ENCODE measurements at regions of chr6 and their contacts with region 1.

Region 1: DNA sequence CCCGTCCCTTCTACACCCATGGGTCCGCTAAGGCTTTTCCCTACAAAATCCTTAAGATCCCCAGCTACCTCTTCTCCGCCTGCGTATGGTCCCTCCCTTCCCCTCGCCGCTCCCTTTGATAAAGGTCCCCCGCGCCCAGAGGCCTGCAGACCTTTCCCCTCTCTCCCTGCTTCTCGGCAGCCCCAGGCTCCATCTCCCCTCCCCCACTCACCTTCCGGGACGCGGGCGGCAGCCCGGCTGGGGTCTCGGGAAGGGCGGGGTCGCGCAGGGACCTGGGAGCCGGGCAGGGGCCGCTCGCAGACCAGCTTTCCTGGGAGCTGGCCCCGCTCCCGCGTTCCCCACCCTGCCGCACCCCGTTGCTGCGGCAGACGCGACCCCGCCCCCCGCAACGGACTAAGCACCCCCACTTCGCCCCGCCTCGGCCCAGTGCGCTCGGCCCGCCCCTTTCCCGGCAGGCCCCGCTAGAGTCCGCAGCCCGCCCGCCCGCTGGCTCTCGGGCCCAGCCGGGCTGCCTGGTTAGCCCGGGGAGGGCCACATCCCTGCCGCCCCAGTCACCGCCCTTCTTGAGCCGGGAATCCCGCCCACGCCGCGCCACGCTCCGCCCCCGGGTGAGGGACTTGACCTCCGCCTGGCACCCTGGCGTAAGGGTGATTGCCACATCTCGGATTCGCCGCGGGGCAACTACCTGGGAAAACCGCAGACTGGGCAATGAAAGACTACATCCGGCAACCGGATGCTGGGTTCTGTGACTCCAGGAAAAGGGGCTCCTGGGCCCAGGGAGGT is at the start of gene FLOT1:
- DNase-seq: peak; percentile 99
- ATAC-seq: peak; percentile 92
- total RNA-seq, gene FLOT1: 207 TPM

Region 2: GRCh38 chr6:29477923-29478450 is 1264.5 kb before region 1 on chr6:
- intact Hi-C with region 1: no loop called
- DNase-seq: no peak
- ATAC-seq: no peak

Region 3: DNA sequence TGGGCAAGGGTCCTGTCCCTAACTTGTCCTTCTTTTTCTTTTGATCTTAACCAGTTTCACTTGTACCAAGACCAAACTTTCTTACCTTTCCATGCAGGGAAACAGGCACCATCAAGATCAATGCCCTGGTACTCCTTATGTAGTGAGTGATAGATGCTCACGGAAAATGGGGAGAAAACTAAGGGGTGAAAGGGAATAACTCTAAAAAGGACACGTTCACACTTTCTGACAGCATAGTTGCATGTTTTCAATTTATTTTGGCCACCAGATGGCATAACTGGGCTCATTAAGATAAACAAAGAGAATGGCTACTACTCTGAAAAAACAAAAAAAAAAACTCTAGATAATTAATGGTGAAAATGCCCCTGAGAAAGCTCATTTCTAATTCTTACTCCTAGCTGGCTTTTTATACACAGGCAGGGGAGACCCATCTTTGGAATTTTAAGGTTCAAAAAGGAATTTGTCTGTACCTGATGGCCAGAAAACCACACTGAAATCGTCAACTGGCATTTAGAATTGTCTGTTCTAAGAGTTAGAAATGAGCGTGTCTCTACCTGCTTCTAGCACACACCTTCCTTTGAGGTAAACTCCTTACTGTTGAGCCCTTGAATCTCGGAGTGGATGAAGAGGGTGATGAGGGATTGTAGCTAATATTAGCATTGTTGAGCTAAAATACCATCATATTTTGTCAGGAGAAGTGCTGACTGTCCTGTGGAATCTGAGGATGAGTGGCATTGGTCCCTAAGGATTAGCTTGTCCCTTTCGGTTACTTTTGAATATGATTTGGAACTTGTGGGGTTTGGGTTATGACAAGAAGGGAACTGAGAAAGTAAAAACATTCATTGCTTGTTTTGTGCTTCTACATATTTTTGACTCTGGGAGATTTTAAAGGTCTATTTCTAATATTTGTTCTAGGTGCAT is 79.6 kb after region 1 on chr6:
- intact Hi-C with region 1: loop called (anchors 5 kb)
- DNase-seq: no peak
- ATAC-seq: peak; percentile 45

Region 4: GRCh38 chr6:30883685-30884520 is 141.4 kb after region 1 on chr6 and contains the start of gene DDR1:
- intact Hi-C with region 1: loop called (anchors 5 kb)
- DNase-seq: peak; percentile 84
- ATAC-seq: peak; percentile 80
- total RNA-seq, gene DDR1: 23.2 TPM

Region 5: GRCh38 chr6:31087494-31088089 is 345.1 kb after region 1 on chr6:
- intact Hi-C with region 1: loop called (anchors 10 kb)
- DNase-seq: peak; percentile 90
- ATAC-seq: peak; percentile 98

Measured in Right ventricle myocardium superior (tissue), 1 donor.